Endothelial cell of umbilical vein (primary cell): ENCODE measurements at regions of chr1 and their contacts with region 1.

Region 1: GRCh38 chr1:176880954-176881595 is 283.4 kb downstream of the ASTN1 start:
- DNase-seq: peak; percentile 46
- H3K4me3 ChIP-seq: no peak overlapping the region
- H3K27ac ChIP-seq: no peak overlapping the region
- H3K4me1 ChIP-seq: no peaks in the 10 kb centered on the region
- H3K27me3 ChIP-seq: no peaks in the 10 kb centered on the region
- CTCF ChIP-seq: peak; percentile 79
- POLR2A ChIP-seq: no peak

Region 2: GRCh38 chr1:176559878-176560277 is 321.2 kb before region 1 on chr1:
- CTCF ChIA-PET with region 1: interaction called, 16 read pairs
- POLR2A ChIA-PET with region 1: no interaction called
- dilution Hi-C with region 1: no loop called
- intact Hi-C with region 1: loop called (anchors 1 kb)
- DNase-seq: peak; percentile 27
- H3K4me3 ChIP-seq: no peak overlapping the region
- H3K27ac ChIP-seq: no peak overlapping the region
- H3K4me1 ChIP-seq: no peaks in the 10 kb centered on the region
- H3K27me3 ChIP-seq: no peaks in the 10 kb centered on the region
- CTCF ChIP-seq: peak; percentile 58 to 64
- POLR2A ChIP-seq: no peak

Region 3: DNA sequence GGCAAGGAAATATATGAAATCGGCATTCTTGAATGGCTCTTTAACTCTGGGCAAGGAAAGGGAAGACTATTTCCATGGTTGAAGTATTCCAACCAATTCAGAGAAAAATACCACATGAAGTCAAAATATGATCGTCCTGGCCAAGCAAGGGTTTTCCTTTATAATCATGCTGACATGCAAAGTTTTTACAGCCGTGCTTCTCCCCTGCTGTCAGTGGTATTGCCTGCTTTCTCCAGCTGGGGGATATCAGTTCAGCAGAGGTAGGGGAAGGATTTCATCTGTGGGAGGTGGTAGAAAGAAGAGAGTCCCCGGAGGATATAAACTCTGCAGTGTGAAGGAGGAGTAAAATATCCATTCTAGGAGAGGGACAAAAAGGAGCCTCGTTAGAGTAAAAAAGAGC is 95.3 kb before region 1 on chr1:
- CTCF ChIA-PET with region 1: no interaction called
- POLR2A ChIA-PET with region 1: no interaction called
- dilution Hi-C with region 1: no loop called
- intact Hi-C with region 1: no loop called
- DNase-seq: no peak
- H3K4me3 ChIP-seq: no peak overlapping the region
- H3K27ac ChIP-seq: no peak overlapping the region
- H3K4me1 ChIP-seq: no peaks in the 10 kb centered on the region
- H3K27me3 ChIP-seq: no peaks in the 10 kb centered on the region
- CTCF ChIP-seq: no peak
- POLR2A ChIP-seq: no peak